MCF 10A (cell line): ENCODE measurements at regions of chr5 and their contacts with region 1.

Region 1: GRCh38 chr5:138542956-138543729 is at the start of gene ETF1:
- DNase-seq: peak; percentile 100
- H3K4me3 Mint-ChIP-seq: peak within 1 kb of the TSS; percentile 79
- H3K27ac Mint-ChIP-seq: peak within 1 kb of the TSS; percentile 97
- H3K4me1 Mint-ChIP-seq: peaks cover 32% of the 10 kb centered on the region
- H3K27me3 Mint-ChIP-seq: no peaks in the 10 kb centered on the region
- CTCF ChIP-seq: no peak
- total RNA-seq, gene ETF1: 307 and 349 TPM in 2 replicates

Region 2: DNA sequence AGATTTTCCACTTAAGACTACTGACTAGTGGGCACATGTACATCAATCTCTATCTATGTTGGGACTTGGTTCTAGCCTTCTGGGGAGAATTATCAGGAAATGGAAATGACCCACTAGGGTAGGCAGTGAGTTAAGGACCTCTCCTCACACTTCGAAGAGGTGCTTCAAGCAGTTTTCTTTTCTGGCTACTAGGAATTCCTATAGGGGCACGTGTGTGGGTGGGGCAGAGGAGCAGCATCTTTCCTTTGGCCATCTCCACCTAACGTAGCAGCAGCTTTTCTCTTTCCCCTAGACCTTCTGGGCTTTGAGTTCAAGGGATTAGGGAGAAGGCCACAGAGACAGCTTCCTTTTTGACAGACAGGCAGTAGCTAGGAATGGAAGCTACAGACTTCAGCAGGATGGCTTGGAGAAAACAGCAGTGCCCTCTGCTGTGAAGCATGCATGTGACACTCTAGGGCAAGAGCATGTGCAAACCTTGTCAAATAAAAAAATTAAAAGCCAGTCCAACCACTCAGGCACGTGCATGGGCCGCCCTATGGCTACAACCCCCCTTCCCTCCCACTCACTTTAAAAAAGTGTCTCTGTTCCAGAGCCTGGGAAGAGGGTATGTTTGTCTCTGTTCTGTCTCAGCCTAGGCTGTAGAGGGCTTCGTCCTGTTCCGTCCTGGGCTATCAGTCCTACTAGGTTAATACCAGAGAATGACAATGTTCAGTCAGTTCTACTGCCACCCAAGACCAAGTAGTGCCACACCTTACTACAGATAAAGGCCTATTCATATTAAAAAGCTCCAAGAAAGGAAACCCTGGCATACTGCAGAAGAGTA is 260.0 kb before region 1 on chr5:
- CTCF ChIA-PET with region 1: no interaction called
- POLR2A ChIA-PET with region 1: no interaction called
- intact Hi-C with region 1: no loop called
- DNase-seq: peak; percentile 57
- H3K4me3 Mint-ChIP-seq: no peak overlapping the region
- H3K27ac Mint-ChIP-seq: no peak overlapping the region
- H3K4me1 Mint-ChIP-seq: no peaks in the 10 kb centered on the region
- H3K27me3 Mint-ChIP-seq: no peaks in the 10 kb centered on the region
- CTCF ChIP-seq: peak; percentile 56

Region 3: DNA sequence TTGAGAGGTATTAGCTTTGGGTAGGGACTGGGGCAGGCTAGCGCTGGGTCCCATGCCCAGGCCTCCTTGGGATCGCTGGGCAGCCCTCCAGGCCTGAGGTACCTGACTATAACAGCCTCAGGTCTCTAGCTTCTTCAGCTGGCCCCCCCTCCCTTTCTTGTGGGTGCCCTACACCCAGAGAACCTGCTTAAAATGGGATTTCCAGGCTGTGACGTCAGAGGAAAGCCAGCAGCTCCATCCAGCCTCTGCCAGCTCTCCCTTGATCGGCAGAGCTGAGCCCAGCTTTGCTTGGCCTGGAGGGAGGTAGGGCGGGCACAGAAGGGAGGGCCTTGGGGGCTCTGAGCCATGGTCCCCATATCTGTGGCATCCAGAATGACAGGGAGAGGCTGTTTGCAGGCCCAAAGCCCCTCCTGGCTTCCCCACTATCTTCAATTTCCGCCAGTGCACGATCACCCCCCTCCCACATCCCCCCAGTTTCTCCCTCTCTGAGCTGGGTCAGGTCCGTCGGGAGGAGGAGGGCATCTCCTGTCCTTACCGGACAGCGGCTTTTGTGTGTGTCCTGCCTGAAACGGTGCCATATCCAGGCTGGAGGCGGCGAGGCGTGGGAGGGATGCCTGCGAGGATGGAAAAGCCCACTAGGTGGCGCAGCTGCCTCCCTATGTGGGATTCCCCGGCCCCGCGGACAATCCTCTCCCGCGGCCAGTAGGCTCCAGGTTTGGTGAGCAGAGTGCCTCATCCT is 93.5 kb before region 1 on chr5:
- CTCF ChIA-PET with region 1: interaction called, 179 read pairs
- POLR2A ChIA-PET with region 1: interaction called, 29 read pairs
- intact Hi-C with region 1: loop called (anchors 1 kb)
- DNase-seq: peak; percentile 95
- H3K4me3 Mint-ChIP-seq: no peak overlapping the region
- H3K27ac Mint-ChIP-seq: no peak overlapping the region
- H3K4me1 Mint-ChIP-seq: peaks cover 7% of the 10 kb centered on the region
- H3K27me3 Mint-ChIP-seq: no peaks in the 10 kb centered on the region
- CTCF ChIP-seq: peak; percentile 98

Region 4: GRCh38 chr5:138491669-138492559 is 51.2 kb before region 1 on chr5:
- CTCF ChIA-PET with region 1: interaction called, 3 read pairs
- POLR2A ChIA-PET with region 1: interaction called, 12 read pairs
- intact Hi-C with region 1: no loop called
- DNase-seq: peak; percentile 97
- H3K4me3 Mint-ChIP-seq: peak overlapping the region; percentile 94
- H3K27ac Mint-ChIP-seq: peak overlapping the region; percentile 70
- H3K4me1 Mint-ChIP-seq: peaks cover 45% of the 10 kb centered on the region
- H3K27me3 Mint-ChIP-seq: no peaks in the 10 kb centered on the region
- CTCF ChIP-seq: no peak

Region 5: DNA sequence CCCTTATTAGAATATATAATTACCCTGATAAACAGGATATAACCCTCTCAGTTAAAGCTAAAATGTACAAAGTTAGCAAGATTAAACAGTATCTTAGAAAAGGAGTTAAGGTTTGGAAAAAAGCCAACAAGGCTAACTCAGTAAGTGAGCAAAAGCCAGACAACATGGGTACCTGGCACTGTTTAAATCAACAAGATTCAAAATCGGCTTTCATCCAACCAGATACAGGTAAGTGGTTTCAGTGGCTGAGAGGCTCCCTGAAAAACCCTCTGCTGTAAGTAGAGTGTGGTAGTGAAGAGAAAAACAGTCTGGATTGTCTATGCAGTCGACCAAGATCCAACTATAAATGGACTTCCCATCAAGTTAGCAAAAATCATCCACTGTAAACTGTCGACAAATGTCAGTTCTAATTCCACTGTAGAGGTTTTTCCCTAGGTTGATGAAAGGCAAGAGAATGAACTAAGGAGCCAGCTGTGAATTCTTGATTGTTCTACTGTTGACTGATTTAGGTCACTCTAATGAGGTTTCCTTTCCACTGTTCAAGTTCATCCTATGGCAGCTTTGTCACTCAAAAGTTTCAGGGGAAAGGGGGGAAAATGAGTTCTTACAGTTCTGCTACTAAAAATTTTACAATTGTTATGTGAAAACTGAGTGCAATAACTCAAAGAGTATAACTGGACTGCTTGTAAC is 27.4 kb before region 1 on chr5:
- CTCF ChIA-PET with region 1: interaction called, 14 read pairs
- POLR2A ChIA-PET with region 1: interaction called, 276 read pairs
- intact Hi-C with region 1: no loop called
- DNase-seq: no peak
- H3K4me3 Mint-ChIP-seq: no peak overlapping the region
- H3K27ac Mint-ChIP-seq: peak overlapping the region; percentile 59
- H3K4me1 Mint-ChIP-seq: peaks cover 15% of the 10 kb centered on the region
- H3K27me3 Mint-ChIP-seq: no peaks in the 10 kb centered on the region
- CTCF ChIP-seq: no peak

Region 6: GRCh38 chr5:138565100-138565821 is 22.1 kb after region 1 on chr5:
- CTCF ChIA-PET with region 1: interaction called, 15 read pairs
- POLR2A ChIA-PET with region 1: interaction called, 9 read pairs
- intact Hi-C with region 1: no loop called
- DNase-seq: no peak
- H3K4me3 Mint-ChIP-seq: no peak overlapping the region
- H3K27ac Mint-ChIP-seq: no peak overlapping the region
- H3K4me1 Mint-ChIP-seq: peaks cover 29% of the 10 kb centered on the region
- H3K27me3 Mint-ChIP-seq: no peaks in the 10 kb centered on the region
- CTCF ChIP-seq: no peak